Breast epithelium (tissue), 4 donors: ENCODE measurements at regions of chr14 and their contacts with region 1.

Region 1: DNA sequence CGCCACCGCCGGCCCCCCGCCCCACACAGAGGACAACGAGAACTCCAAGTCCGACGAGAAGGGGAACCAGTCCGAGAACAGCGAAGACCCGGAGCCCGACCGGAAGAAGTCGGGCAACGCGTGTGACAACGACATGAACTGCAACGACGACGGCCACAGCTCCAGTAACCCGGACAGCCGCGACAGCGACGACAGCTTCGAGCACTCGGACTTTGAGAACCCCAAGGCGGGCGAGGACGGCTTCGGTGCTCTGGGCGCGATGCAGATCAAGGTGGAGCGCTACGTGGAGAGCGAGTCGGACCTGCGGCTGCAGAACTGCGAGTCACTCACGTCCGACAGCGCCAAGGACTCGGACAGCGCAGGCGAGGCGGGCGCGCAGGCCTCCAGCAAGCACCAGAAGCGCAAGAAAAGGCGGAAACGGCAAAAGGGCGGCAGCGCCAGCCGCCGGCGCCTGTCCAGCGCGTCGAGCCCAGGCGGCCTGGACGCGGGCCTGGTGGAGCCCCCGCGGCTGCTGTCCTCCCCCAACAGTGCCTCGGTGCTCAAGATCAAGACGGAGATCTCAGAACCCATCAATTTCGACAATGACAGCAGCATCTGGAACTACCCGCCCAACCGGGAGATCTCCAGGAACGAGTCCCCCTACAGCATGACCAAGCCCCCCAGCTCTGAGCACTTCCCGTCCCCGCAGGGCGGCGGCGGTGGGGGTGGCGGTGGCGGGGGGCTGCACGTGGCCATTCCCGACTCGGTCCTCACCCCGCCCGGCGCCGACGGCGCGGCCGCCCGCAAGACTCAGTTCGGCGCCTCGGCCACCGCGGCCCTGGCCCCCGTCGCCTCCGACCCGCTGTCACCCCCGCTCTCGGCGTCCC is 150.9 kb downstream of the EGLN3 start:
- DNase-seq: no peak
- H3K4me3 ChIP-seq: peak overlapping the region; percentile 4 to 38 (median 28)
- H3K27ac ChIP-seq: no peak overlapping the region
- H3K4me1 ChIP-seq: no peaks in the 10 kb centered on the region
- H3K27me3 ChIP-seq: no peaks in the 10 kb centered on the region
- CTCF ChIP-seq: no peak
- POLR2A ChIP-seq: no peak

Region 2: GRCh38 chr14:33057596-33057995 is 742.3 kb before region 1 on chr14:
- intact Hi-C with region 1: loop called (anchors 5 kb)
- DNase-seq: no peak
- H3K4me3 ChIP-seq: no peak overlapping the region
- H3K27ac ChIP-seq: no peak overlapping the region
- H3K4me1 ChIP-seq: no peaks in the 10 kb centered on the region
- H3K27me3 ChIP-seq: no peaks in the 10 kb centered on the region
- CTCF ChIP-seq: no peak
- POLR2A ChIP-seq: no peak